Heart left ventricle (tissue), 16 donors: ENCODE measurements at regions of chr9 and their contacts with region 1.

Region 1: GRCh38 chr9:38620483-38621433 is at the start of gene ANKRD18A:
- DNase-seq: peak; percentile 26 to 84 (median 79)
- ATAC-seq: peak; percentile 55 to 89 (median 87)
- H3K4me3 ChIP-seq: peak within 1 kb of the TSS; percentile 14 to 66 (median 49)
- H3K27ac ChIP-seq: peak within 1 kb of the TSS in 6 of 12 donors; percentile 2 to 68 (median 35)
- H3K4me1 ChIP-seq: peaks cover 0 to 31% (median 10%) of the 10 kb centered on the region in 12 donors
- H3K27me3 ChIP-seq: peaks cover 8 to 85% (median 41%) of the 10 kb centered on the region in 9 donors
- CTCF ChIP-seq: peak; percentile 31 to 57 (median 42)
- POLR2A ChIP-seq: no peak
- total RNA-seq, gene ANKRD18A: 0.20 to 6.8 (median 3.1) TPM

Region 2: DNA sequence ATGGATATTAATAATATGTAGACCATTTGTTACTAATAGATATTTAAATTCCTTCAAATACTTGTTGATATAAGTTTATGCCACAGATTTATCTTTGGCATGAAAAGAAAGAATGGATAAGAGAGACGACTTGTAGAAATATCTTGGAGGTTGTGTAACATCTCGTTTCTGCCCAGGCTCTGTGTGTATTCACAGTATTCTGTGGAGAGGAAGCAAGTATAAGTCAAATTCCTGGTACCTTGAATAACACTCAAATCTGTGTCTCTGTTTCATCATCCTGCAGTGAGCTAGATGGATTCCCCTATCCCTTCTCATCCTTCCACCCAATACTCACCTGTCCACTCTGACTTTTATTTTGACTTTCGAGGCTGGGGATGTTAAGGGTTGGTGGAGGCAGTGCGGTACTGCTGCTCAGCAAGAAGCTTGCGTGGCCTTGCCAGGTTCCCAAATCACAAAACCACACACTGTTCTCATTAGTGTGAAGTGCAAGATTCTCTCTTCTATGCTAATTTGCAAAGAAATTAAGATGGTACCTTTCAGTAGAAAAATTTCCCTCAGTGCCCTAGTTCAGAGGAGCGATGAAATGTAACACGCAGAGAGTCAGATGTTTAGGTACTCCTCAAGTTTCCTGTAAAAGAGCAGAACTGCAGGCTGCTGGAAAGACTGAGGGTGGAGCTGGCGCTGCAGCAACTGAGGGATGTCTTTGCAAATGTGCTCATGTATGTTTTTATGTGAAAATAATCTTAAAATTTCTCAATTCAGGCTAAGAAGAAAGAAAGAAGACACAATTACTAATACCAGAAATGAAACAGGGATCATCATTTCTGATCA is 42.2 kb after region 1 on chr9:
- intact Hi-C with region 1: loop called in 1 of 10 experiments (anchors 10 kb)
- DNase-seq: no peak
- ATAC-seq: peak in 3 of 4 donors; percentile 37 to 61 (median 47)
- H3K4me3 ChIP-seq: no peak overlapping the region
- H3K27ac ChIP-seq: no peak overlapping the region
- H3K4me1 ChIP-seq: no peaks in the 10 kb centered on the region
- H3K27me3 ChIP-seq: peaks cover 0 to 5% (median 0%) of the 10 kb centered on the region in 9 donors
- CTCF ChIP-seq: peak in 5 of 12 donors; percentile 11 to 43 (median 28)
- POLR2A ChIP-seq: no peak

Region 3: GRCh38 chr9:38671748-38672147 is 51.0 kb after region 1 on chr9:
- intact Hi-C with region 1: loop called in 2 of 10 experiments (anchors 10 kb)
- DNase-seq: no peak
- ATAC-seq: no peak
- H3K4me3 ChIP-seq: no peak overlapping the region
- H3K27ac ChIP-seq: peak overlapping the region in 2 of 12 donors; percentile 8 to 32
- H3K4me1 ChIP-seq: peaks cover 0 to 16% (median 5%) of the 10 kb centered on the region in 12 donors
- H3K27me3 ChIP-seq: no peaks in the 10 kb centered on the region
- CTCF ChIP-seq: no peak
- POLR2A ChIP-seq: no peak

Region 4: GRCh38 chr9:38747067-38747466 is 126.3 kb after region 1 on chr9:
- intact Hi-C with region 1: no loop called
- DNase-seq: no peak
- ATAC-seq: no peak
- H3K4me3 ChIP-seq: no peak overlapping the region
- H3K27ac ChIP-seq: no peak overlapping the region
- H3K4me1 ChIP-seq: no peaks in the 10 kb centered on the region
- H3K27me3 ChIP-seq: no peaks in the 10 kb centered on the region
- CTCF ChIP-seq: no peak
- POLR2A ChIP-seq: no peak